ENCODE measurements at regions of chr9 and their contacts with region 1.

Region 1: DNA sequence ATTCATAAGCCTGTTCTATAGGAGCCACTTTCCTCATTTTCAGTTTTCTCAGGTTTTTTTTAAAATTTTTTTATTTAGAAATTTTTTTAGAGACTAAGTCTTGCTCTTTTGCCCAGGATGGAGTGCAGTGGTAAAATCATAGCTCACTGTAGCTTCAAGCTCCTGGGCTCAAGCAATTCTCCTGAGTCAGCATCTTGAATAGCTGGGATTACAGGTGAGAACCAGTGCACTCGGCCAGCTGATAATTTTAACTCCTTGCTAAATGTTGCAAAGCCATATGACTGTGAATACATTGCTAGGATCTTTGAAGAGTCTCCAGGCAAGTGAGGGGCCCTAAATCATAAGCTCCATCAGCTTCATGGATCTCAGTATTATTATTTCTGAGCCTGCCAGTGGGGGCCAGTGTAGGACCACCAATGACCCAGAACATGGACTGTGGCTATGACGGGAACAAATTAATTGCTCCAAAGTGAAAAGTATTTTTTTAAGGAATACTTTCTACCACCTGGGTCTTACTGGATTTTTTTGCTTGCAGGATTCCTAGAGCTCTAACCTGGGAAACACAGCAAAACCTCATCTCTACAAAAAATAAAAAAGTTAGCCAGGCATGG is 5.7 kb upstream of the GAPVD1 start:
- DNase-seq: no peak
- ATAC-seq: no peak

Region 2: DNA sequence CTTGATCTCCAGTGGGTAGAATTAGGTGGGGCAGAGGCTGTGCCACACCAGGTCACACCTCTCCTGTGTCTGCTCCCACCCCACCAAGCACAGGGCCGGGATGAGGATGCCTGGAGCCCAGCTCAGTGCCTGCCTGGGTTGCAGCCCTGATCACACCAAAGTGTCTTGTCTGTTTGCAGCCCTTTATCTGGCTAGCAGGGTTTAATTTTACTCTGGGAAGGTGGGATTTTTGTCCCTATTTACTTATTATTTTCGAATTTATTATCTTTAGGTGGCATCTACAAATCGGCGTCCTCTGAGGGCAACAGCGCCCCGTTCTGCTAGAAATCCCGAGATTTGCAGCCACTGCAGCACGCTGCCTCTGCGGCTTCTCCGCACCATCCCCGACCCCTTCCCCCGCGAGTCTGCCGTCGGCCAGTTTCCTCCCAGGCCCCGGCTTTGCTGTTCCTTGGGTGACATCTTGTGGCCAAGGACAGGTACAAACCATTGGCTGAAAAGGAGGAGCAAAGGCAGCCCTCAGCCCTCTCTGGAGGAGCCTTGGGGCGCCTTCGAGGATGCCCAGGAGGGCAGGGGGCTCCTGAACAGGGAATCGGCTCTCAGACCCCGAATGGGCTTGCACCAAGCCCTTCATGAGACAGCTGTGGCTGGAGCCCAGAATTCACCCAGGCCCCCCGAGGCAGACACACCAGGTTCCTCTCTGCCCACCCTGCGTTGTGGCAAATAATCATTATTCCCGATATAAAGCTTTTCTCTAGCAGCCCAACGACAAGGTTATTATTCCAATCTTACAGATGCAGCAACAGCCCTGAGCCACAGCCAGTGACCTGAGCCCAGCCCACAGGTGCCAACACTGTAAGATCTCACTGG is 118.8 kb after region 1 on chr9:
- intact Hi-C with region 1: loop called (anchors 10 kb)
- DNase-seq: peak; percentile 74
- ATAC-seq: peak; percentile 90